Heart right ventricle (tissue), 16 donors: ENCODE measurements at regions of chr12 and their contacts with region 1.

Region 1: DNA sequence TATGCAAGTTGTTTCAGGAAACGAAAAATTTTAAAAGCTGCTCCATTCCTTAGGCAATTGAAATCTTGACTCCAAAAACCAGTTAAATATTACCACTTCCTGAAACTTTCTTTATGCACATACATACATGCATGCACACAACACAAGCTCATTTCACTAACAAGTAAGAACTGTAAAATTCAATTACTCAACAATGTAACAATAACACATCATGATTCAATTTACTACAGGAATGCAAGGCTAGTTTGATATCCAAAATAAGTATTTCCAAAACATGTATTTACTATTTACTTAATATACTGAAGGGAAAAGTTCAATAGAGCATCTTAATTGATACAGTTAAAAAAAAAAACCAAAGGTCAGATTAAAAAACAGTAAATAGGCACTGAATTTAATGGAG is 19.6 kb downstream of the NAP1L1 start:
- DNase-seq: no peak
- ATAC-seq: no peak
- H3K4me3 ChIP-seq: no peak overlapping the region
- H3K27ac ChIP-seq: no peak overlapping the region
- H3K4me1 ChIP-seq: peaks cover 0 to 5% (median 1%) of the 10 kb centered on the region in 9 donors
- H3K27me3 ChIP-seq: no peaks in the 10 kb centered on the region
- CTCF ChIP-seq: no peak

Region 2: GRCh38 chr12:75564398-75564797 is 500.5 kb before region 1 on chr12:
- intact Hi-C with region 1: no loop called
- DNase-seq: no peak
- ATAC-seq: peak in 1 of 8 donors; percentile 45
- H3K4me3 ChIP-seq: no peak overlapping the region
- H3K27ac ChIP-seq: peak overlapping the region in 2 of 10 donors; percentile 6 to 12
- H3K4me1 ChIP-seq: peaks cover 0 to 18% (median 9%) of the 10 kb centered on the region in 9 donors
- H3K27me3 ChIP-seq: no peaks in the 10 kb centered on the region
- CTCF ChIP-seq: no peak

Region 3: DNA sequence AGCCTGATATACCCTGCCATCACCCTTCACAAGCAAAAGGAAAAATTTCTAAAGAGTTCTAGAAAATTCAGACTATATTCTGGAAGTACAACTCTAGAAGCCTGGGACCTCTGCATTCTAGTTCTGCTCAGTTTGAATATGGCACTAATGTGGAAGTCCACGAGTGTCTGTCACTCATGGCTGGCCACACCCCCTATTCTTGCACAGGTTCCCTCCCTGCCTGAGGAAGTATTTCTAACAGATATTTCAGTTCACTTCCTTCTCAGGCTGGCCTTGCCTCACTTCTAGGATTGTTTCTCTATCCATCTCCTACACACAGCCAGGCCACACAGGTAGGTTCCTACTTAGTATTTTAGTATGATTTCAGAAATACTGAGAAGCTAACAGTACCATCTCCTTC is 100.8 kb before region 1 on chr12:
- intact Hi-C with region 1: no loop called
- DNase-seq: no peak
- ATAC-seq: peak in 4 of 8 donors; percentile 42 to 62 (median 56)
- H3K4me3 ChIP-seq: no peak overlapping the region
- H3K27ac ChIP-seq: no peak overlapping the region
- H3K4me1 ChIP-seq: peaks cover 0 to 28% (median 15%) of the 10 kb centered on the region in 9 donors
- H3K27me3 ChIP-seq: no peaks in the 10 kb centered on the region
- CTCF ChIP-seq: no peak

Region 4: GRCh38 chr12:76356094-76356493 is 291.2 kb after region 1 on chr12:
- intact Hi-C with region 1: loop called in 1 of 10 experiments (anchors 10 kb)
- DNase-seq: no peak
- ATAC-seq: no peak
- H3K4me3 ChIP-seq: no peak overlapping the region
- H3K27ac ChIP-seq: no peak overlapping the region
- H3K4me1 ChIP-seq: no peaks in the 10 kb centered on the region
- H3K27me3 ChIP-seq: no peaks in the 10 kb centered on the region
- CTCF ChIP-seq: no peak